Heart right ventricle (tissue), 16 donors: ENCODE measurements at regions of chr21 and their contacts with region 1.

Region 1: GRCh38 chr21:16534408-16535101 is 804.8 kb downstream of the USP25 start:
- DNase-seq: peak; percentile 63 to 80
- ATAC-seq: peak; percentile 66 to 83 (median 77)
- H3K4me3 ChIP-seq: peak overlapping the region in 9 of 10 donors; percentile 12 to 63 (median 49)
- H3K27ac ChIP-seq: peak overlapping the region; percentile 66 to 92 (median 86)
- H3K4me1 ChIP-seq: peaks cover 0 to 38% (median 17%) of the 10 kb centered on the region in 9 donors
- H3K27me3 ChIP-seq: no peaks in the 10 kb centered on the region
- CTCF ChIP-seq: no peak

Region 2: GRCh38 chr21:16588433-16588860 is 53.9 kb after region 1 on chr21:
- intact Hi-C with region 1: loop called in 2 of 10 experiments (anchors 5 to 10 kb)
- DNase-seq: peak; percentile 45 to 51
- ATAC-seq: peak; percentile 79 to 94 (median 91)
- H3K4me3 ChIP-seq: peak overlapping the region; percentile 16 to 54 (median 44)
- H3K27ac ChIP-seq: peak overlapping the region in 9 of 10 donors; percentile 51 to 75 (median 68)
- H3K4me1 ChIP-seq: peaks cover 2 to 43% (median 20%) of the 10 kb centered on the region in 9 donors
- H3K27me3 ChIP-seq: no peaks in the 10 kb centered on the region
- CTCF ChIP-seq: no peak